Naive thymus-derived CD8-positive, alpha-beta T cell (primary cell): ENCODE measurements at regions of chr19 and their contacts with region 1.

Region 1: GRCh38 chr19:4400135-4400936 is at the start of gene SH3GL1:
- DNase-seq: peak; percentile 86 to 96 (median 92)
- ATAC-seq: peak; percentile 61 to 66
- H3K4me3 Mint-ChIP-seq: peak within 1 kb of the TSS; percentile 79 to 97 (median 92)
- H3K27ac Mint-ChIP-seq: peak within 1 kb of the TSS; percentile 86 to 99 (median 98)
- H3K4me1 Mint-ChIP-seq: peaks cover 30 to 68% (median 61%) of the 10 kb centered on the region in 4 donors
- H3K27me3 Mint-ChIP-seq: no peaks in the 10 kb centered on the region
- polyA plus RNA-seq, gene SH3GL1: 11.8 to 20.4 (median 12.3) TPM

Region 2: DNA sequence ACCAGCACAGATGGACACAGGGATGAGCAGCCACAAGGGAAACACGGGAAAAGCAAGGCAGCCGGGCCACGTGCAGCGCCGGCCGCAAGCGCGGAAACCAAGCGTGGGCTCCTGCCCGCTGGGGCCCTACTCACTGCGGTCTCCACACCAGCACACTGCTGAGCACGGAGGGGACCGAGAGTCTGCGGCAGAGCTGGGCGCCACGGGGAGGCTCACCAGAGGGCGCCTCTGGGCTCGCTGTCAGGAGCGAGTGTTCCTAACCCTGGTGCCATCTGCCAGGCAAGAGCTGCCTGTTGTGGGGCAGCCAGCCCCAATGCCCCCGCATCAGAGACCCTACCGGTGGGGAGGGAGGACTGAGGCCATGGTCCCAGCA is 30.5 kb before region 1 on chr19:
- POLR2A ChIA-PET with region 1: interaction called, 31 read pairs
- DNase-seq: peak; percentile 57 to 82 (median 60)
- ATAC-seq: peak; percentile 78 to 83
- H3K4me3 Mint-ChIP-seq: peak overlapping the region; percentile 85 to 96 (median 91)
- H3K27ac Mint-ChIP-seq: peak overlapping the region; percentile 91 to 96 (median 93)
- H3K4me1 Mint-ChIP-seq: peaks cover 20 to 56% (median 45%) of the 10 kb centered on the region in 4 donors
- H3K27me3 Mint-ChIP-seq: no peaks in the 10 kb centered on the region

Region 3: DNA sequence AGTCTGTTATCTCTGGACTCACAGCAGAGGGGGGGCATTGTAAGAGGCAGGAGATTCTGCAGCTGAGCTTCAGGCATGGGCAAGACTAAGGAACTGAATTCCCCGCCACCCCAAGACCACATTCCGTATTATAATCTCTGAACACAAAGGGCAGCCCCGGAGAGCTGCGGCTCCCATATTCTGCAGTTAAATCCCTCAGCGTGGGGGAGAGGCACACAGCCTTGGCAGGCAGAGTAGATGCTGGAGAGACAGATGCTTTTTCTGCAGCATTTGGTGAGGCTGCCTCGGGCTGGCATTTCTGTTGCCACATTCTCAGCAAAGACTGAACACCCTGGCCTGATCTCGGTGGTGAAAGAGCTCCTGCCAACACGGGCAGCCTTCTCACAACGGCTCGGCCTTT is 15.0 kb after region 1 on chr19:
- POLR2A ChIA-PET with region 1: no interaction called
- DNase-seq: no peak
- ATAC-seq: no peak
- H3K4me3 Mint-ChIP-seq: no peak overlapping the region
- H3K27ac Mint-ChIP-seq: peak overlapping the region in 1 of 10 donors; percentile 62
- H3K4me1 Mint-ChIP-seq: peaks cover 0 to 2% (median 0%) of the 10 kb centered on the region in 4 donors
- H3K27me3 Mint-ChIP-seq: no peaks in the 10 kb centered on the region